ENCODE measurements at regions of chr3 and their contacts with region 1.

Region 1: GRCh38 chr3:119302697-119303551 is 8.7 kb downstream of the ARHGAP31 start:
- DNase-seq: no peak
- H3K4me3 ChIP-seq: no peak overlapping the region
- H3K27ac ChIP-seq: no peak overlapping the region
- H3K4me1 ChIP-seq: peaks cover 5 to 42% (median 25%) of the 10 kb centered on the region in 4 experiments
- H3K27me3 ChIP-seq: no peaks in the 10 kb centered on the region

Region 2: DNA sequence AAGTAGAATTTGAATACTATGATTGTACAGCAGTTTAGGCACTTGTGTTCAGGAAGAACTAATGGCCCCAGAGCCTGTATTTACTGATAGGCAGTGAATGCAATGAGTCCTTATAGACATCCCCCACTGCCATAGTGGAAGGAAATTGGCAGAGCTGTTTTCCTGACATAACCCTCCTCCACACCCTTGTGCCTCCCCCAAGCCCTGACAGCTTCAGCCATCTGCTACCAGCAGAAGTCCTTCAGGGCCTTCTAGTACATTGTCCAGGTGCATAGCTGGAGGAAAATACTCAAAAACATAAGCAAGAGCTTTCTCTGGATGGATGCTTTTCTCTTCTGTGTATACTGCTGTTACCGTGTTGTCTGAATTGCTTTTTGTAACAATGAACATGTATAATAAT is 11.9 kb after region 1 on chr3:
- CTCF ChIA-PET with region 1: interaction called, 16 read pairs
- POLR2A ChIA-PET with region 1: interaction called, 4 read pairs
- DNase-seq: no peak
- H3K4me3 ChIP-seq: no peak overlapping the region
- H3K27ac ChIP-seq: no peak overlapping the region
- H3K4me1 ChIP-seq: peaks cover 0 to 42% (median 5%) of the 10 kb centered on the region in 4 experiments
- H3K27me3 ChIP-seq: no peaks in the 10 kb centered on the region

Measured in common myeloid progenitor, CD34-positive (primary cell).